Activated CD4-positive, alpha-beta memory T cell treated with anti-CD3 and anti-CD28 coated beads for 36 hours (primary cell): ENCODE measurements at regions of chr5 and their contacts with region 1.

Region 1: DNA sequence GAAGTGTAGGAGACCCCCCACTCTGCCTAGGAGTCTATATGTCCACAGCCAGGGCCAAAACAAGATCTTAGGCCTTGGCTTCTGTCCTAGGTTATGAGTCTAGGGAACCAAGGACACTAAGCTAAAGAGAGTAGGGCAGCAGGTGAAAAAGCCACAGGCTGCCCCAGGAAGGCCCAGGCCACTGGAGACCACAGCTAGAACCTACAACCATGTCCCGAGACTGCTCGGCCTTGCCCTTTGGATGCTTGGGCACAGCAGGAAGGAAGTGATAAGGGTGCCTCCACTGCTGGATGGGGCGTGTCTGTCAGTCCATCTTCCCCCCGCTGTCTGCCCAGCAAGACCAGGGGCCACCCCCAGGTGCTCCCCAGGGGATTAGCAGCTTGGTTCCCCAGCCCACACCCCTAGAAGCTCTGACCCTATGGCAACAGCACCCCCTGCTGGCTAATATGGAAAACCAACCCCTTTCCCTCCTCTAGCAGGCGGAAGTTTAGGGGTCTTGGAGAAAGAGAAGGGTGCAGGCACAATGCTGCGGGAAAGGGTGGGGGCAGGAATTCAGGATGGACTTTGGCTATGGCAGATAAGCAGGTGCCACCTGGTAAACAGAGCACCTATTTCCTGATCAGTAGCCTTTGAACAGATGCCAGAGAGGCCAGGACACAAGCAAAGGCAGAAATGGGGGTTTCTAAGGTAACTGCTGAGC is 10.5 kb upstream of the IRF1 start:
- DNase-seq: peak; percentile 83
- H3K4me3 Mint-ChIP-seq: no peak overlapping the region
- H3K27ac Mint-ChIP-seq: peak overlapping the region; percentile 43
- H3K4me1 Mint-ChIP-seq: peaks cover 20% of the 10 kb centered on the region
- H3K27me3 Mint-ChIP-seq: peaks cover 3% of the 10 kb centered on the region

Region 2: DNA sequence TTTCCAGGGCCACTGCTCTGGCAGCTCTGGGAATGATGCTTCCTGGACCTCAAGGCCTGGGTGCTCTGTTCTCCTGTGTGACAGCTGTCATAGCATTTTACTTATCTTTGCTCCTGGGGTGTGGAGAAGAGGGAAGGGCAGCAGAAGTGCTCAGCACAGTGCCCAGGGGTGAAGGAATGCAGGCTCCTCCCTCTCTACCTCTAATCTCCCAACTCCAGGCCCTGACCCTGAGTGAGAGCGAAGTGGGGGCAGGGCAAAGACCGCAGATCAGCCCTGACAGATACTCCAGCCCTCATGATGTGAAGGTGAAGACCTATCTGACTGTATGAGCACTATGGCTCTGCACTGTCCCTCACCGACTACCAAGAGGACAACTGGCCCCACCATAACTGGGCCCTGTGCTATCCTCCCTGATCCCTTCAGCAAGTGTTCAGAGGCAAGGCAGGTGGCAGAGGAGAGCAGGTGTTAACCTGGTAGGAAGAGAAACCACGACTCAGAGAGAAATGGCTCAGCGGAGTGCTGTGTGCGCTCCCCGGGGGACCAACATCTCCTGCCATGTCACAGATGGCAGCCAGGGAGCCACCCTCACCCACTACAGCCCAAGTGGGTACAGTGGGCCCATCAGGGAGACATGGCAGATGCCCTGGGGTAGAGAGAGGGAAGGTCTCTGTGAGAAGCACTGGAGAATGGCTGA is 506.4 kb before region 1 on chr5:
- CTCF ChIA-PET with region 1: no interaction called
- POLR2A ChIA-PET with region 1: no interaction called
- intact Hi-C with region 1: no loop called
- DNase-seq: no peak
- H3K4me3 Mint-ChIP-seq: no peak overlapping the region
- H3K27ac Mint-ChIP-seq: no peak overlapping the region
- H3K4me1 Mint-ChIP-seq: peaks cover 25% of the 10 kb centered on the region
- H3K27me3 Mint-ChIP-seq: no peaks in the 10 kb centered on the region

Region 3: DNA sequence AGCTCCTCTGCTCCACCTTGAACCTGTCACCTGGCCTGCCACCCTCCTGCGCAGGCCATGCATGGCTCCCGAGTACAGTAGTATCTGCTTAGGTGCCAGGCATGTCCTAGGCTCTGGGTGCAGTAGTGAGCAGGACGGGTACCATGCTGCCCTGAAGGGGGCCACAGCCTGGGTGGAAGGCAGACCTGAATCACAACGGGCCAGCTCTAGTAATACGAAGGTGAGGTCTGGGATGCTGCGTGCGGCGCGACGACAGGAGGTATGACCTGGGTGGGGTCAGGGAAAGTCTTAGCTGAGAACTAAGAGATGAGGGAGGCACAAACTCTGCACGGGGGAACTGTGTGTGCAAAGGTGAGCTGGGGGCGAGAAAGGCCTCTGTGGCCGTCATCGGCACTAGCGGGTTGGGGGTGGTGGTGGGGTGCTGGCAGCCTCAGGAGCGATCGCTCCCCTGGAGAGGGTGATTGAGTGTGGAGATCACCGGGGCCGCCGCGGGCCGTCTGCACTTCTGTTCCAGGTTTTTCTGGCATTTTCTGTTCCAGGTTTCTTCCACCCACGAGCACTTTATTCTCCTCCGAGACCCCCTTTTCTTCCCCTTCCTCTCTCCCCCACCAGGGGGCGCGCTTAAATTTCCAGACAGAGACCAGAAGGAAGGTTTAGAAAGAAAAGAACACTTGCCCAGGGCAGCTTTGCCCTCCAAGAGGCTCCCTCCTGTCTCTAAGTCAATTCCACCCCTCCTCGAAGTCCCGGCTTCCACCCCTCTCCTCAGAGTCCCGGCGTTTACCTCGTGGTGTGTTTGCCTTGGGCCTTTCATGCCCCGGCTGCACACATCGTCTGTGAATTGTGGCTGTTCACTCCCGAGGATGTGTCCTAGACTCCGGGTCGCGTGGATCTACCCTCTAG is 228.5 kb before region 1 on chr5:
- CTCF ChIA-PET with region 1: interaction called, 9 read pairs
- POLR2A ChIA-PET with region 1: no interaction called
- intact Hi-C with region 1: loop called (anchors 2 kb)
- DNase-seq: peak; percentile 81
- H3K4me3 Mint-ChIP-seq: no peak overlapping the region
- H3K27ac Mint-ChIP-seq: no peak overlapping the region
- H3K4me1 Mint-ChIP-seq: peaks cover 8% of the 10 kb centered on the region
- H3K27me3 Mint-ChIP-seq: peaks cover 12% of the 10 kb centered on the region

Region 4: GRCh38 chr5:132386644-132387286 is 114.3 kb before region 1 on chr5:
- CTCF ChIA-PET with region 1: interaction called, 461 read pairs
- POLR2A ChIA-PET with region 1: interaction called, 11 read pairs
- intact Hi-C with region 1: loop called (anchors 1 kb)
- DNase-seq: peak; percentile 87
- H3K4me3 Mint-ChIP-seq: no peak overlapping the region
- H3K27ac Mint-ChIP-seq: peak overlapping the region; percentile 14
- H3K4me1 Mint-ChIP-seq: peaks cover 42% of the 10 kb centered on the region
- H3K27me3 Mint-ChIP-seq: no peaks in the 10 kb centered on the region

Region 5: GRCh38 chr5:132419502-132420468 is 81.3 kb before region 1 on chr5:
- CTCF ChIA-PET with region 1: interaction called, 32 read pairs
- POLR2A ChIA-PET with region 1: interaction called, 70 read pairs
- intact Hi-C with region 1: no loop called
- DNase-seq: peak; percentile 78
- H3K4me3 Mint-ChIP-seq: peak overlapping the region; percentile 15
- H3K27ac Mint-ChIP-seq: peak overlapping the region; percentile 83
- H3K4me1 Mint-ChIP-seq: peaks cover 89% of the 10 kb centered on the region
- H3K27me3 Mint-ChIP-seq: no peaks in the 10 kb centered on the region

Region 6: GRCh38 chr5:132466433-132467286 is 34.4 kb before region 1 on chr5:
- CTCF ChIA-PET with region 1: interaction called, 31 read pairs
- POLR2A ChIA-PET with region 1: interaction called, 42 read pairs
- intact Hi-C with region 1: no loop called
- DNase-seq: peak; percentile 85
- H3K4me3 Mint-ChIP-seq: peak overlapping the region; percentile 68
- H3K27ac Mint-ChIP-seq: peak overlapping the region; percentile 75
- H3K4me1 Mint-ChIP-seq: peaks cover 86% of the 10 kb centered on the region
- H3K27me3 Mint-ChIP-seq: no peaks in the 10 kb centered on the region

Region 7: GRCh38 chr5:132479111-132479951 is 21.8 kb before region 1 on chr5:
- CTCF ChIA-PET with region 1: interaction called, 20 read pairs
- POLR2A ChIA-PET with region 1: interaction called, 103 read pairs
- intact Hi-C with region 1: no loop called
- DNase-seq: no peak
- H3K4me3 Mint-ChIP-seq: peak overlapping the region; percentile 28
- H3K27ac Mint-ChIP-seq: peak overlapping the region; percentile 87
- H3K4me1 Mint-ChIP-seq: peaks cover 68% of the 10 kb centered on the region
- H3K27me3 Mint-ChIP-seq: no peaks in the 10 kb centered on the region

Region 8: GRCh38 chr5:132622608-132623007 is 121.5 kb after region 1 on chr5:
- CTCF ChIA-PET with region 1: no interaction called
- POLR2A ChIA-PET with region 1: no interaction called
- intact Hi-C with region 1: no loop called
- DNase-seq: no peak
- H3K4me3 Mint-ChIP-seq: no peak overlapping the region
- H3K27ac Mint-ChIP-seq: no peak overlapping the region
- H3K4me1 Mint-ChIP-seq: peaks cover 13% of the 10 kb centered on the region
- H3K27me3 Mint-ChIP-seq: no peaks in the 10 kb centered on the region